Activated naive CD4-positive, alpha-beta T cell treated with anti-CD3 and anti-CD28 coated beads for 36 hours (primary cell): ENCODE measurements at regions of chr9 and their contacts with region 1.

Region 1: DNA sequence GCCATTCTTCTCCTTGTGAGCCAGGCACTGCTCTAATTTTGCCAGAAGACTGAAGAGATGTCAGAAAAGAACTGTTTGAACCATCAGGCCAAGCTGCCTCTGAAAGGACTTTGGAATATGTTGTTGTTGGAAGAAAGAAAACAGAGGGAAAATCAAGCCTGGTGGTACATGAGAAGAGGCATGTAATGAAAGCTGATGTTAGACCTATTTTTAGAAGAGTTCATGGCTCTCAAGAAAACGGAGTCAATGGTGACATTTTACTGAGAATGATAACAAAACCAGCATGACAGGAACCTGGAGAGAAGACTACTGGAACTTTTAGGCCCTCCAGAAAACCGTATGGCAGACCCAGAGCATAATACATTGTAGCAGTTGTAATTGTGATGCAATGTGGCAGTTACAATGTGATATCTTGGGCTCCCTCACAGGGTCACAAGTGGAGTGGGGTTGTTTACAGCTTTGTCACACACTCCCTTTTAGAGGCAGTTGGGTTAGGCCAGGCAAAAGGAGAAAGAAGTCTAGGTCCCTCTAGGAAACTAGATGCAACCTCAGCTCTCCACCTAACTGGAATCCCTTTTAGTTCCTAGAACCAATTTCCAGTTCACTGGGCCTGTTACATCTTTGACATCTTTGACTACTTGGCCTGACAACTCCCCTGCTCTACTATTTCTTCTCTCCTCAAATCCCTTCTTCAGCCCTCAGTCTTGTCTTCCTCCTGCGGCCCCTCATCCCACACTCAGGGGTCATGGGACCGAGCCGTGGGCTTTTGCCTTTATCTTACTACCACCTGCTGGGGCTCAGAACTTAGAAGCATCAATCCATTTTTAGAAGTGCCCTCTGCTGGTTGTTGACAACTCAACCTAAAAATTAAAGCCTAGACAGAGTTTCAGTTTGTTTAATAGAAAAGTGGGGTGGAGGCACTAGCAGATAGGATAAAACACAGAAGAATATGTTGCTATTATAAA is 61.2 kb upstream of the JAK2 start:
- DNase-seq: peak; percentile 48
- H3K4me3 Mint-ChIP-seq: no peak overlapping the region
- H3K27ac Mint-ChIP-seq: peak overlapping the region; percentile 57
- H3K4me1 Mint-ChIP-seq: peaks cover 32% of the 10 kb centered on the region
- H3K27me3 Mint-ChIP-seq: no peaks in the 10 kb centered on the region

Region 2: DNA sequence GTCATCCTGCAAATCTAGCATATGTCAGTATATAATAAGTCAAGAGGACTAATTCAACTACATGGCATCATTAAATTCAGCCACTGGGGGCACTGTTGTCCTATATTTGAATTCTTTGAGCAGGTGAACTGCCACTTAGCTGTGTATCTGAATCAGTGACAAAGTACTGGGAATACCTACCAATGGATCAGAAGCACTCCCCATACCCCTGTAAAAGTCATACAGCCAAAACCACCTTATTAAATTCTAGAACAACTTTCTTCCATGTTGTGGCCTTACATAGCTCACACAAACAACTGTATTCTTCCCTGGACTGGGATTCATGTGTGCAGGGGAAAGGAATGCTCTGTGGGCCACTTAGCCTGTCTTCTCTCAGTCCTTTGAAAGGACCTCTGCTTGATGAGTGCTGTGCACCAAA is 319.2 kb before region 1 on chr9:
- CTCF ChIA-PET with region 1: no interaction called
- intact Hi-C with region 1: loop called (anchors 10 kb)
- DNase-seq: peak; percentile 88
- H3K4me3 Mint-ChIP-seq: no peak overlapping the region
- H3K27ac Mint-ChIP-seq: no peak overlapping the region
- H3K4me1 Mint-ChIP-seq: peaks cover 19% of the 10 kb centered on the region
- H3K27me3 Mint-ChIP-seq: no peaks in the 10 kb centered on the region

Region 3: DNA sequence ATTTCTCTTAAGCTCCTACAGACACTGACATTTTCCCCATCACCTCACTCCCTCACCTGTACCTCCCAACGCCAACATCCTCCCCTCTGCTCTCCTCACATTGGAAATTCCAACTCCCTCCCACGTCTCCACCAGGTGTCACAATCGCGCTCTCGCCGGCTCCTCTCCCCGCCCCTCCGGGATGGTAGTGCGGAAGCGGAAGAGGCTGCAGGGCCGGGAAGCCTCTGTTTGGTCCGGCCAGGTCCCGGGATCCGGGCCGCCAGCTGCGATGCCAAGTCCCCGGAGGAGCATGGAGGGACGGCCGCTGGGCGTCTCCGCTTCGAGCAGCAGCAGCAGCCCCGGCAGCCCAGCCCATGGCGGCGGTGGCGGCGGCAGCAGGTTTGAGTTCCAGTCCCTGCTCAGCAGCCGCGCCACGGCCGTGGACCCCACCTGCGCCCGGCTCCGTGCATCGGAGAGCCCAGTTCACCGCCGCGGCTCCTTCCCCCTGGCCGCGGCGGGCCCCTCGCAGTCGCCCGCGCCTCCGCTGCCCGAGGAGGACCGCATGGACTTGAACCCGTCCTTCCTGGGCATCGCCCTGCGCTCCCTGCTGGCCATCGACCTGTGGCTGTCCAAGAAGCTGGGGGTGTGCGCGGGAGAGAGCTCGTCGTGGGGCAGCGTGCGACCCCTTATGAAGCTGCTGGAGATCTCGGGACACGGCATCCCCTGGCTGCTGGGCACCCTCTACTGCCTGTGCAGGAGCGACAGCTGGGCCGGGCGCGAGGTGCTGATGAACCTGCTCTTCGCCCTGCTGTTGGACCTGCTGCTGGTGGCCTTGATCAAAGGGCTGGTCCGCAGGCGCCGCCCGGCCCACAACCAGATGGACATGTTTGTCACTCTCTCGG is 261.5 kb before region 1 on chr9 and contains the start of gene PLPP6:
- CTCF ChIA-PET with region 1: no interaction called
- intact Hi-C with region 1: loop called (anchors 5 kb)
- DNase-seq: peak; percentile 91
- H3K4me3 Mint-ChIP-seq: peak within 1 kb of the TSS; percentile 87
- H3K27ac Mint-ChIP-seq: peak within 1 kb of the TSS; percentile 77
- H3K4me1 Mint-ChIP-seq: peaks cover 52% of the 10 kb centered on the region
- H3K27me3 Mint-ChIP-seq: no peaks in the 10 kb centered on the region
- total RNA-seq, gene PLPP6: 4.6 to 5.3 TPM

Region 4: GRCh38 chr9:4939118-4939561 is 15.3 kb after region 1 on chr9:
- CTCF ChIA-PET with region 1: interaction called, 13 read pairs
- intact Hi-C with region 1: loop called (anchors 1 kb)
- DNase-seq: no peak
- H3K4me3 Mint-ChIP-seq: no peak overlapping the region
- H3K27ac Mint-ChIP-seq: peak overlapping the region; percentile 88
- H3K4me1 Mint-ChIP-seq: peaks cover 79% of the 10 kb centered on the region
- H3K27me3 Mint-ChIP-seq: no peaks in the 10 kb centered on the region